MCF 10A (cell line): ENCODE measurements at regions of chr11 and their contacts with region 1.

Region 1: GRCh38 chr11:119474682-119475596 is 52.0 kb upstream of the THY1 start:
- DNase-seq: peak; percentile 81
- H3K4me3 Mint-ChIP-seq: peak overlapping the region; percentile 7
- H3K27ac Mint-ChIP-seq: peak overlapping the region; percentile 57
- H3K4me1 Mint-ChIP-seq: peaks cover 27% of the 10 kb centered on the region
- H3K27me3 Mint-ChIP-seq: peaks cover 11% of the 10 kb centered on the region
- CTCF ChIP-seq: peak; percentile 94

Region 2: DNA sequence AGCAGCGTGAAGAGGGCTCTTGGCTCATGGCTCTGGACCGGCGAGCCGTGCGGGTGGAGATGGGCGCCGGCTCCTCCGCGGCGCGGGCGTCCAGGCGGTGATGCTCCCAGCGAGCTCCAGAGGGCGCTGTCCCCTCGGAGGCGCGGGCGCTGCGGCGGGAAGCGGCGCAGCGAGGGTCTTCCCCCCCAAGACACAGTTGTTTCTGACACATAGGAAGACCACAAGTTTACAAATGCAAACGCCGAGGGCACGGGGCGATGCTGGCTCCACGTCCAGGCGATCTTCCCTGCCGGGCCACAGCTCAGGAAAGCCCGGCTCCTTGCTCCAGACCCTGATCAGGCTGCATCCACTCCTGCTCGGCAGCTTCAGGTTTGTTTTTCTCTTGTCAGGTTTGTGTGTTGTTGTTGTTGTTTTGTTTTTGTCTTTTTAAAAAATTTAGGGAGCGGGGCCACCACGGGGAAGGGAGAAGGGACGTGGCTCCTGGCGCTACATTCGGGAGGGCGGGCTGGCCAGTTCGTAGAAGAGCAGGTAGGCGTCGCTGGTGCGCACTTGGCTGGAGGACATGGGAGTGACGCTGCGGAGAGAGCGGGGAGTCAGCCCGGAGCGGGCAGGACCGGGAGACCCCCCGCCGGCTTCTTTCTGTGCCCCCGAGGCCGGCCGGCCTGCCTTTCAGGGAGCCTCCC is 118.4 kb before region 1 on chr11:
- CTCF ChIA-PET with region 1: interaction called, 58 read pairs
- POLR2A ChIA-PET with region 1: interaction called, 9 read pairs
- intact Hi-C with region 1: no loop called
- DNase-seq: peak; percentile 80
- H3K4me3 Mint-ChIP-seq: peak overlapping the region; percentile 79
- H3K27ac Mint-ChIP-seq: no peak overlapping the region
- H3K4me1 Mint-ChIP-seq: peaks cover 41% of the 10 kb centered on the region
- H3K27me3 Mint-ChIP-seq: no peaks in the 10 kb centered on the region
- CTCF ChIP-seq: peak; percentile 92

Region 3: GRCh38 chr11:119373921-119374631 is 100.9 kb before region 1 on chr11:
- CTCF ChIA-PET with region 1: interaction called, 56 read pairs
- POLR2A ChIA-PET with region 1: interaction called, 9 read pairs
- intact Hi-C with region 1: loop called (anchors 1 kb)
- DNase-seq: peak; percentile 81
- H3K4me3 Mint-ChIP-seq: no peak overlapping the region
- H3K27ac Mint-ChIP-seq: no peak overlapping the region
- H3K4me1 Mint-ChIP-seq: peaks cover 48% of the 10 kb centered on the region
- H3K27me3 Mint-ChIP-seq: no peaks in the 10 kb centered on the region
- CTCF ChIP-seq: peak; percentile 96

Region 4: DNA sequence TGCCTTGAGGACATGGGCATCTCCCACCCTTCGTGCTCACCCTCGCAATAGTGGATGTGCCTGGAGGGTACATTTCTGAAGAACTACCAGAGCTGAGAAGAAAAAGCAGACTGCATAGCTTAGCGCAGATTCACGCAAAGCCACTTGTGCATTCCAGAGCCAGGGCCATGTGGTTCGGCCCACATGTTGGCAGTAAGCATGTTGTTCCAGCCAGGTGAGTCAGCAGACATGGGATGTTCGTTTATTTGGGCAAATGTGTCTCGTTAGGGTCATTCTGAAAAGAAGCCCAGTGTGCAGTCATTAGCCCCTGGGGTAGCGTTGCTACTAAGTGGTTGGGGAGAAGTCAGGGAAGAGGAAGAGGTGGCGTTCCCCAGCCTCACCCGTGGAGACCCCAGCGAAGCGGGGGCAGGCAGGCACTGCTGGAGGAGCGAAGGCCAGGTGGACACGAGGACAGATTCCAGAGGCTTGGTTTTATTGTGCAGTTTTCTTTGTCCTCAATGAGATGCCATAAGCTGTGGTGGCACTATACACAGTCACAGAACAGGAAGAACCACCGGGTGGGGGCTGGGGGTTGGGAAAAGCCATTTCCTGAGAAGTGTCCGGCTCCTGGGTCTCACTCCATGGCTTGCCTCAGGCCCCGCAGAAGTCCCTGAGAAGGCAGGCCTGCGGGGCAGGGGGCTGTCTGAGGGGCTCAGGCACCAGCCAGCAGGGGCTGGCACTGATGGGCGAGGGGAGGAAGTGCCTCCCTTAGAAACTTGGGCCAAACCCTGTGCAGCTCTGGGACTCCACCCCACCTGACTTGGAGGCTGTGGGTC is 57.0 kb before region 1 on chr11:
- CTCF ChIA-PET with region 1: interaction called, 3 read pairs
- POLR2A ChIA-PET with region 1: interaction called, 4 read pairs
- intact Hi-C with region 1: loop called (anchors 2 kb)
- DNase-seq: peak; percentile 87
- H3K4me3 Mint-ChIP-seq: peak overlapping the region; percentile 66
- H3K27ac Mint-ChIP-seq: peak overlapping the region; percentile 93
- H3K4me1 Mint-ChIP-seq: peaks cover 23% of the 10 kb centered on the region
- H3K27me3 Mint-ChIP-seq: peaks cover 12% of the 10 kb centered on the region
- CTCF ChIP-seq: no peak

Region 5: GRCh38 chr11:119432484-119433357 is 42.2 kb before region 1 on chr11:
- CTCF ChIA-PET with region 1: interaction called, 15 read pairs
- POLR2A ChIA-PET with region 1: interaction called, 7 read pairs
- intact Hi-C with region 1: loop called (anchors 2 kb)
- DNase-seq: peak; percentile 58
- H3K4me3 Mint-ChIP-seq: peak overlapping the region; percentile 60
- H3K27ac Mint-ChIP-seq: no peak overlapping the region
- H3K4me1 Mint-ChIP-seq: peaks cover 37% of the 10 kb centered on the region
- H3K27me3 Mint-ChIP-seq: no peaks in the 10 kb centered on the region
- CTCF ChIP-seq: no peak